Common myeloid progenitor, CD34-positive (primary cell): ENCODE measurements at regions of chr6 and their contacts with region 1.

Region 1: GRCh38 chr6:139595183-139595582 is 220.7 kb upstream of the CITED2 start:
- DNase-seq: peak; percentile 39 to 84 (median 75)
- H3K4me3 ChIP-seq: no peak overlapping the region
- H3K27ac ChIP-seq: peak overlapping the region; percentile 37 to 68
- H3K4me1 ChIP-seq: peaks cover 11 to 36% (median 19%) of the 10 kb centered on the region in 4 experiments
- H3K27me3 ChIP-seq: no peaks in the 10 kb centered on the region

Region 2: DNA sequence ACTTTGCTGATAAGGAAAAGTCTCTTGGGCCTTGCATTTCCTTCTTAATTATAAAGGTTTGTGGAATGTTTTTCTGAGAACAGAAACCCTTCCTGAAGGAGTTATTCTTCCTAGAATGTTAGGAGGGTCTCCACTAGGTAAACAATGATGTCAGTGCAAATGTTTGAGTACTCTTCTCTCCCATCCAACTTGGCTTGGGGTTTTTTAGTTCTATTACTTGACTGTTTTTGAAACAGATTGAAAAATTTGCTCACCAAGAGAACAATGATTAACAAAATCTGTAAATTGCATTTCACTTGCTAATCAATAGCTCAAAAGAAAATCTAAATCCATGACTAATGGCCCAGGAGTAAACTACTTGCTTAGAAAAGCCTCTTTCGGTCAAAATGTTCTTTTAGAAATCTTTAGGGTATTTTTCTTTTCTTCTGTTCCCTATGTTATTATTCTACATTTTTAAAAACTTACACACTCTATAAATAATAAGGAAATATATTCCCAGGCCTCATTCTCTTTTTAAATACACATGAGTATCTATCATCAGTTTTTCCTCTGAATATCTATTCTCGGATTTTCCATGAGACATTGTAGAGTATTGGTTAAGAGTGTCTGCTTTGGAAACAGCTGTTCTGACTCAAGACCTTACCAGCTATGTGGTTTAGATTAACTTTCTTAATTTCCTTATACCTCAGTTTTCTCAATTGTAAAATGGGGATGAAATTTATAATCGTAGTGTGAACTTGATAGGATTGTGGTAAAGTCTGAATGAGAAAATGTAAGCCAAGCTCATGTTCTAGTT is 13.5 kb after region 1 on chr6:
- CTCF ChIA-PET with region 1: interaction called, 10 read pairs
- POLR2A ChIA-PET with region 1: no interaction called
- DNase-seq: no peak
- H3K4me3 ChIP-seq: no peak overlapping the region
- H3K27ac ChIP-seq: no peak overlapping the region
- H3K4me1 ChIP-seq: peaks cover 0 to 10% (median 1%) of the 10 kb centered on the region in 4 experiments
- H3K27me3 ChIP-seq: no peaks in the 10 kb centered on the region